Activated CD4-positive, alpha-beta T cell treated with anti-CD3 and anti-CD28 coated beads for 36 hours (primary cell): ENCODE measurements at regions of chr9 and their contacts with region 1.

Region 1: DNA sequence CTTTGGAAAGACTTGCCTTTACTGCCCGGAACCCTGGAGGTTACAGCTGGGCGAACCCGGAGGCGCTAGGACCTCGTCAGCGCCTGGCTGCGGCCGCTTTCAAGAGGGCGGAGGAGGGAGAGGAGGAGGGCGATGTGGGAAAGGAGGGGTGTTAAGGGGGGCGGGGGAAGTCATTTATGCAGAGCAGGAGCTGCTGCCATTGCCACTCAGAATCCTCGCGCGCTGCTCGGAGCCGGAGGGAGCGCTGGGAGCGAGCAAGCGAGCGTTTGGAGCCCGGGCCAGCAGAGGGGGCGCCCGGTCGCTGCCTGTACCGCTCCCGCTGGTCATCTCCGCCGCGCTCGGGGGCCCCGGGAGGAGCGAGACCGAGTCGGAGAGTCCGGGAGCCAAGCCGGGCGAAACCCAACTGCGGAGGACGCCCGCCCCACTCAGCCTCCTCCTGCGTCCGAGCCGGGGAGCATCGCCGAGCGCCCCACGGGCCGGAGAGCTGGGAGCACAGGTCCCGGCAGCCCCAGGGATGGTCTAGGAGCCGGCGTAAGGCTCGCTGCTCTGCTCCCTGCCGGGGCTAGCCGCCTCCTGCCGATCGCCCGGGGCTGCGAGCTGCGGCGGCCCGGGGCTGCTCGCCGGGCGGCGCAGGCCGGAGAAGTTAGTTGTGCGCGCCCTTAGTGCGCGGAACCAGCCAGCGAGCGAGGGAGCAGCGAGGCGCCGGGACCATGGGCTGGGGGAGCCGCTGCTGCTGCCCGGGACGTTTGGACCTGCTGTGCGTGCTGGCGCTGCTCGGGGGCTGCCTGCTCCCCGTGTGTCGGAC is at the start of gene PCSK5:
- DNase-seq: peak; percentile 91
- ATAC-seq: peak; percentile 82
- H3K4me3 Mint-ChIP-seq: peak within 1 kb of the TSS; percentile 93
- H3K27ac Mint-ChIP-seq: peak within 1 kb of the TSS; percentile 76
- H3K4me1 Mint-ChIP-seq: peaks cover 31% of the 10 kb centered on the region
- H3K27me3 Mint-ChIP-seq: peaks cover 4% of the 10 kb centered on the region
- total RNA-seq, gene PCSK5: 3.0 to 3.1 TPM

Region 2: DNA sequence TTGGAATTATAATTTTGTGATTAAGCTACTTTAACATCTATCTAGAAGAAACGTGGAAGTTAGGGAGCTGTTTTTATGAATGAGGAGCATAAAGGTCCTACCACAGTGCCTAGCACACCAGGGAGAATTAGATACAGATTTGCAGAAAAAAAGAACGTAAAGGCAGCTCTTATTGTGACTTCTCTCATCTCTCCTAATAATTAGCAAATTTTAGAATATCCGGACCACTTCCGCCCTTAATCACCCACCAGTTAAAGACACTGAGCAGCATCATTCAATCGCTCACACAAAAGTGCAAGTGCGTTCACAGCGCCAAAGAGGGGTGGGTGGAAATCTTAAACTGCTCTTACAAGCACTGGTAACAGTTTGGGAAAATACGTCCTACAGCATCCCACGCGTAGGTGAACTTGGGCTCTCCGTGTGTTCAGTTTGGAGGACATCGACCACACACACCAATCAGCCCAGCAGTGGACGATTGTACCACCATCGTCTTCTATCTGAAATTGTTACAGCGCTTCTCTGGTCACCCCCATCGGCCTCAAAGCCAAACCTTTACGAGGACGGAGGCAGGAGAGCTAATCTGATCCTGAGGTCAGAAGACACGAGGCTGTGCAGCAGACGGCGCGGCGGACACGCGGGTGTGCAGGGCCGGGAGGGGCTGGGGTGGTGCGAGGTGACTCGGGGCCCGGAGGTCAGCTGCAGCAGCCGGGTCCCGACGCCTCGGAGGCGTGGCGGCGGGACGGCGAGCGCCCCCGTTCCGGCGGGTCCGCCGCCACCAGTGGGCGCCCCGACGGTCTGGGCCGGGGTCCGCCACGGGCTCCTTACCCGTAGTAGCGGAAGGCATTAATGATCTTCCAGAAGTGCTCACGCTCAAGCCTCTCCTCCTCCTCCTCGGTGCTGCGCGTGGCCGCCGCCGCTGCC is 863.2 kb before region 1 on chr9:
- CTCF ChIA-PET with region 1: no interaction called
- POLR2A ChIA-PET with region 1: no interaction called
- intact Hi-C with region 1: loop called in 1 of 2 experiments (anchors 5 kb)
- DNase-seq: peak; percentile 72
- ATAC-seq: peak; percentile 34
- H3K4me3 Mint-ChIP-seq: peak overlapping the region; percentile 98
- H3K27ac Mint-ChIP-seq: peak overlapping the region; percentile 99
- H3K4me1 Mint-ChIP-seq: peaks cover 33% of the 10 kb centered on the region
- H3K27me3 Mint-ChIP-seq: no peaks in the 10 kb centered on the region

Region 3: DNA sequence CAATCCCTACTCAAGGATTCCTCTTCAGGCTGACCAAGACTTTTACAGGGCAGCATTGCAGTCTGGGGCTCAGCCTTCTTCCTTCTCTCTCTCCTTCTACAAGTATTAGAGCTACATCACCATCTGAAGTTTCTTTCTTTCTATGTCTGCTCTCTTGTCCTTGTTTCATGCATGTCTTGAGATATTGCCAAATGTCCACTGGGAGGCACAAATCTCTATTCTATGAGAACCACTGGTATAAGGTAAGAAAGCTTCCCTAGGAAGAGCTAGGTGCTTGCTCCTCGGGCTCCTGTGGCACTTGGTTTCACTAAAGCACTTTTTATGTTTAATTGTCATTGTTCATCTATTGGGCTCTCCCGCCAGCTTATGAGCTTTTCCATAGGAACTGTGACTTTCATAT is 289.4 kb before region 1 on chr9:
- CTCF ChIA-PET with region 1: no interaction called
- POLR2A ChIA-PET with region 1: no interaction called
- intact Hi-C with region 1: no loop called
- DNase-seq: no peak
- ATAC-seq: no peak
- H3K4me3 Mint-ChIP-seq: no peak overlapping the region
- H3K27ac Mint-ChIP-seq: no peak overlapping the region
- H3K4me1 Mint-ChIP-seq: no peaks in the 10 kb centered on the region
- H3K27me3 Mint-ChIP-seq: peaks cover 3% of the 10 kb centered on the region

Region 4: GRCh38 chr9:75918154-75918553 is 27.5 kb after region 1 on chr9:
- CTCF ChIA-PET with region 1: no interaction called
- POLR2A ChIA-PET with region 1: no interaction called
- intact Hi-C with region 1: loop called in 1 of 2 experiments (anchors 2 kb)
- DNase-seq: peak; percentile 50
- ATAC-seq: peak; percentile 78
- H3K4me3 Mint-ChIP-seq: no peak overlapping the region
- H3K27ac Mint-ChIP-seq: no peak overlapping the region
- H3K4me1 Mint-ChIP-seq: peaks cover 13% of the 10 kb centered on the region
- H3K27me3 Mint-ChIP-seq: no peaks in the 10 kb centered on the region

Region 5: DNA sequence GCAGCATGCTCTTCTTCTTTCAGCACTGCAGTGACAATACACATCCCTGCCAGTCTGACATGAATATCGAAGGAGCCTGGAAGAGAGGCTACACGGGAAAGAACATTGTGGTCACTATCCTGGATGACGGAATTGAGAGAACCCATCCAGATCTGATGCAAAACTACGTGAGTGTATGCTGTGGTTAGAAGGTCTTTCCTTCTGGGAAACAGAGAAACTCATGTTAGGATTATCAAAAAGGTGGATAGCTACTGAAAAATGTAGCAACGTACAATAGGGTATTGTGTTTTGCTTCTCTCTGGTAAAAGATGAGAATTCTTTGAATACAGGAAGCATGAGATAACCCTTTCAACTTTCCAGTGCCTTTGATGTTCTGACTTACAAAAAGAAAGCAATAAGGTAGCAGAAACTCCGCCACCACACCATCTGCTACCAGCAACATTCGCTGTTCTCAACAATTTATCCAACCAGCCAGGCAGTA is 133.1 kb after region 1 on chr9:
- CTCF ChIA-PET with region 1: no interaction called
- POLR2A ChIA-PET with region 1: no interaction called
- intact Hi-C with region 1: loop called (anchors 1 to 5 kb)
- DNase-seq: peak; percentile 63
- ATAC-seq: peak; percentile 83
- H3K4me3 Mint-ChIP-seq: peak overlapping the region; percentile 56
- H3K27ac Mint-ChIP-seq: peak overlapping the region; percentile 88
- H3K4me1 Mint-ChIP-seq: peaks cover 89% of the 10 kb centered on the region
- H3K27me3 Mint-ChIP-seq: no peaks in the 10 kb centered on the region

Region 6: DNA sequence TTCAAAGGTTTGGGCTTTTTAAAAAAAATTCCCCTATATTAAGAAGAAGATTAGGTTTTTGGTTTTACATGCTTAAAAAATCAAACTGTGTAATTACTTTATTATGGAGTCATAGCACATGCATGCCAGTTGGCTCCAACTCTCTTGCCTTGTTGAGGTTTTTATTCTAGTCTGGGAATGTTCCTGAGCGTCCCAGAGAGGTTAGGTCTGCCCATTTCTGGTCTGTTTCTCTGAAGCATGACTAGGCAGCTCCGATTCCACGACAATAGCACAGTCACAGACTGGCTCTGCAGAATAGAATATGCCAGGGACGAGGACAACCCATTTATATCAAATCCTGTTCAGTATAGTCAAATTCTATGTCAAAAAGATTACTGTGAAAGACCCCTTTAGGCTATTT is 216.8 kb after region 1 on chr9:
- CTCF ChIA-PET with region 1: no interaction called
- POLR2A ChIA-PET with region 1: no interaction called
- intact Hi-C with region 1: no loop called
- DNase-seq: no peak
- ATAC-seq: no peak
- H3K4me3 Mint-ChIP-seq: no peak overlapping the region
- H3K27ac Mint-ChIP-seq: no peak overlapping the region
- H3K4me1 Mint-ChIP-seq: no peaks in the 10 kb centered on the region
- H3K27me3 Mint-ChIP-seq: no peaks in the 10 kb centered on the region

Region 7: DNA sequence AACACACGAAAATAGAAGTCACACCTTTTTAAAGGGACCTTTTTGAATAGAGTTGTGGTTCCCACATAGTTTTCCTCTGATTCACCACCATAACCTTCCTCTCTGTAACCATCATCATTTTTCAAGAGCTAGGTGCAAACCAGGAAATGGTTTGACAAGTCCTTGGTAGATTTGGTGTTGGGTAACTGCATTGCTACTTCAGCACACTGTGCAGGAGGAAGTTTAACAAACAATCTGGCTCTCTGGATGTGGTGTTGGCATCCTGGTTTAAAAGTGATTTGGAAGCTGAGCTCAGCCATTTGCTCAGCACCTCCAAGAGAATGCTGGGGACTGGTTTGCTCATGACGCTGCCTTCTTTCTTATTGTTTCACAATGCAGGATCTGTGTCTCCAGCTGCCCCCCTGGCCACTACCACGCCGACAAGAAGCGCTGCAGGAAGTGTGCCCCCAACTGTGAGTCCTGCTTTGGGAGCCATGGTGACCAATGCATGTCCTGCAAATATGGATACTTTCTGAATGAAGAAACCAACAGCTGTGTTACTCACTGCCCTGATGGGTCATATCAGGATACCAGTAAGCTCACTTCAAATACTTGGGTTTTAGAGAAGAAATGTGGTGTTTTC is 290.5 kb after region 1 on chr9:
- CTCF ChIA-PET with region 1: no interaction called
- POLR2A ChIA-PET with region 1: no interaction called
- intact Hi-C with region 1: loop called (anchors 5 to 10 kb)
- DNase-seq: peak; percentile 7
- ATAC-seq: peak; percentile 93
- H3K4me3 Mint-ChIP-seq: no peak overlapping the region
- H3K27ac Mint-ChIP-seq: no peak overlapping the region
- H3K4me1 Mint-ChIP-seq: peaks cover 10% of the 10 kb centered on the region
- H3K27me3 Mint-ChIP-seq: no peaks in the 10 kb centered on the region

Region 8: GRCh38 chr9:76302947-76303940 is 412.6 kb after region 1 on chr9:
- CTCF ChIA-PET with region 1: no interaction called
- POLR2A ChIA-PET with region 1: no interaction called
- intact Hi-C with region 1: loop called (anchors 5 to 10 kb)
- DNase-seq: peak; percentile 21
- ATAC-seq: no peak
- H3K4me3 Mint-ChIP-seq: no peak overlapping the region
- H3K27ac Mint-ChIP-seq: no peak overlapping the region
- H3K4me1 Mint-ChIP-seq: no peaks in the 10 kb centered on the region
- H3K27me3 Mint-ChIP-seq: peaks cover 7% of the 10 kb centered on the region